Right ventricle myocardium inferior (tissue), 1 donor: ENCODE measurements at regions of chr7 and their contacts with region 1.

Region 1: DNA sequence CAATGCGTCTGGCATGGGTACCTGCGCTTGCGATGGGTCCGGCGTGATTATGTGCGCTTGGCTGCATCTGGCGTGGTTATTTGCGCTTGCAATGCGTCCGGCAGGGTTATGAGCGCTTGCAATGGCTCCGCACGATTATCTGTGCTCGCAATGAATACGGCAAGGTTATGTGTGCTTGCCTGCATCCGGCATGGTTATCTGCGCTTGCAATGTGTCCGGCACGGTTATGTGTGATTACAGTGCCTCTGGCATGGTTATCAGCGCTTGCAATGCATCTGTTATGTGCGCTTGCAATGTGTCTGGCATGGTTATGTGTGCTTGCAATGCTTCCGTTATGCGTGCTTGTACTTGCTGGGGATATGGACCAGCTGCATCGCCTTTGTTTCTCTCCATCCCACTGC is 37.7 kb downstream of the RBAK start:
- DNase-seq: no peak
- ATAC-seq: no peak

Region 2: GRCh38 chr7:4797858-4798705 is 285.2 kb before region 1 on chr7:
- intact Hi-C with region 1: loop called (anchors 10 kb)
- DNase-seq: peak; percentile 88
- ATAC-seq: peak; percentile 67